CD4-positive, alpha-beta memory T cell (primary cell): ENCODE measurements at regions of chr10 and their contacts with region 1.

Region 1: DNA sequence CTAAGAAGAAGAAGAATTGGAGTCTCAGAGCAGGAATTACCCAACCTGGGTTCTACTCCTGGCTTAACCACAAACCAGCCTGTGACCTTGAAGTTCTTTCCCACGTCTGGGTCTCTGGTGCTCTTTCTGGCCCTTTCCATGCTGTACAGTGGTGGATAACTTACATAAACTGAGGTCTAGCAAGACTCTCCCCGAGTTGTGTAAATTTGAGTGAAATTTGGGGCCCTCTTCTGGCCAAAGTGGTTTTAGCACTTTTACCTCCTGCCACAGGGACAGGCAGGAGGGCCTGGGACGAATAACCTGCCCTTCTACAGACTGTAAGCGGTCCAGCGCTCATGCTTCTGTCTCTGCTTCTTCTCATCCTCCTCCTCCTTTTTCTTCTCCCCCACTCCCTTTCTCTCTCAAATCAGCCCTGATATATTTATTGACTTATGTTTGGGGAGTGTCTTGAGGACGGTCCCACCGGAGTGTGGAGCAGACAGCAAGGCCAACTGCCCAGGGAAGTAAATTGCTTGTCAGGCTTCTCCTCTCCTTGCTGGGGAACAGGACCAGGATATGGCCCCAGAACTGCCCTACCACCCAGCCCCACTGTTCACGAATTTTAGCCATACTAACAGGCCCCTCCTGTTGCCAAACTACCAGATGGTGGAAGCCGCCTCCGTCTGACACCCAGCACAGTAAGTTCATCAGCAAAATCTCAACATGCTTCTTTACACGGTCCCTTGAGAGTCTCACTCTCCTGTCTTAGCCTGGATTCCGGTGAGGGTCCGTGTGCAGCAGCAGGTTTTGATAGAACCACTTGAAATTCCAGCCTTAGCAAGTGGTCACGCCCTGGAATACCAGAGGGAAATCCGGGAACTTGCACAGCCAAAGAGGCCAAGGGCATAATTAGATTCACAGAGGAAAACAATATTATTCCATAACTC is 4.0 kb upstream of the SH3PXD2A start:
- DNase-seq: peak; percentile 51 to 58 (median 54)
- H3K4me3 ChIP-seq: no peak overlapping the region
- H3K4me3 Mint-ChIP-seq: peak overlapping the region in 1 of 8 donors; percentile 15
- H3K27ac ChIP-seq: no peak overlapping the region
- H3K27ac Mint-ChIP-seq: no peak overlapping the region
- H3K4me1 ChIP-seq: peaks cover 13% of the 10 kb centered on the region
- H3K4me1 Mint-ChIP-seq: peaks cover 5 to 12% (median 8%) of the 10 kb centered on the region in 4 donors
- H3K27me3 ChIP-seq: peaks cover 8% of the 10 kb centered on the region
- H3K27me3 Mint-ChIP-seq: peaks cover 5 to 13% of the 10 kb centered on the region in 2 donors

Region 2: DNA sequence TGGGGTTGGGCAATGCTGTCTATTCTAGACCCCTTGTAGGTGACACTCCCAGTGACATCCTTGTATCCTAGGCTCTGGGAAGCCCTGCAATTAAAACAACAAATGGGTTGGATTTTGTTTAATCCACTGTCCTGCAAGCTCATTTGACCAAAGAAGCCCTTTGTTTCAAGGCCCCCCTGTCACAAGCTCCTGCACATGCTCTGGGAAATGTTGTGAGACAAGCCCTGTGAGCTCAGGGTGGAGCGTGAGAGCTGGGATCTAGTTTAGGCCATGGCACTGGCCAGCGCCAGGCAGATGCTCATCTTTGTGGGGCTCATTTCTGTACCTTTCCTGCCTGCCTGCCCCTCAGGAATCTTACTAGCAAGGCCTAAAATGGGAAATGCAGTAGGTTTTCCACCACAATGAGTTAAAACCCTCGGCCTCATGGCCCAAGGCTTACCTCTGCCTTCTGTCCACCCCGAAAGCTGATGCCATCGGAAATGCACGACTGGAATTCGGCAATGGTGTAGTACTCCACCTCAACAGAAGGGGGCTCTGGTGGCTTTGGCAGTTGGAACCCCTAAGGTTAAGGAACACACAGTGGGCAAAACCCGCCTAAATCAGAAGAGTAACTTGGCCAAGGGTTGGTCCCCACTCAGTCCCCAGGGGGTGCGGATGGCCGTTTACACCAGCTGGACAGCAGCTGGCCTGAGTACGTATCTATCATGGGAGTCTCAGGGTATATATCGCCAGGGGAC is 253.9 kb before region 1 on chr10:
- CTCF ChIA-PET with region 1: no interaction called
- POLR2A ChIA-PET with region 1: no interaction called
- intact Hi-C with region 1: loop called (anchors 10 kb)
- DNase-seq: peak; percentile 26 to 53 (median 44)
- H3K4me3 ChIP-seq: no peak overlapping the region
- H3K4me3 Mint-ChIP-seq: no peak overlapping the region
- H3K27ac ChIP-seq: no peak overlapping the region
- H3K27ac Mint-ChIP-seq: peak overlapping the region in 1 of 7 donors; percentile 57
- H3K4me1 ChIP-seq: no peaks in the 10 kb centered on the region
- H3K4me1 Mint-ChIP-seq: no peaks in the 10 kb centered on the region
- H3K27me3 ChIP-seq: no peaks in the 10 kb centered on the region
- H3K27me3 Mint-ChIP-seq: no peaks in the 10 kb centered on the region

Region 3: DNA sequence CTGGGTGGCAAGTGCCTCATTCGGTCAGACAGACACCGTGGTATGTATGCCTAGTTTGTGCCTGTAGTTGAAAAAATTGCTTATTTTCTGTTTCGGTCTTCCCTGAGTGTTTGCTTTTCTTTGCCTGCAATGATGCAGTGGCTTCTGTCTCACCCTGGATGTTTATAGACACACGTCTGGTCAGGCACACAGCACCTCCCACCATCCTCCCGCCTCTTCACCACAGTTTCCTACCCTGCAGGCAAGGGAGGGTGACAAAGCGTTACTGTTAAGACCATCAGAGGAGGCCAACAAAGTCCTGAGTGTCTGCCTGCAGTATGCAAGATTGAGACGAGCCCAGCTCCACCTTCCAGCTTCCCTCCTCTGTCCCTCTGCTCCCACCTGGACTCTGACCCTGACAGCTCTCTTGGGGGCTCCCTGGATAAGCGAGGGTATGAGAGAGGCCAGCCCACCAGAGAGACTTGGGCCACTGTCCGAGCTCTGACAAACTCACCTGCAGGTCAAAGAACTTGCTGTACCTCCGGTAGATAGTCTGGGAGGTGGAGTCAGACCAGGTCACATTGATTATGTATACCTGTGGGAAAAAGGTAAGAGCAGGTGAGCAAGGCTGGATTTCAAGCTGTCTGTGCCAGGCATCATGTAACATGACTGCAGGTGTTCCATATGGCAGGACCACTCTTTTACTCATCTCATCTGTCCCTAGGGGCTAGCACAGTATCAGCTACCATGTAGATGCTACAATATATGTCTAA is 58.5 kb before region 1 on chr10:
- CTCF ChIA-PET with region 1: interaction called, 3 read pairs
- POLR2A ChIA-PET with region 1: interaction called, 3 read pairs
- intact Hi-C with region 1: loop called (anchors 10 kb)
- DNase-seq: peak; percentile 29 to 66 (median 39)
- H3K4me3 ChIP-seq: no peak overlapping the region
- H3K4me3 Mint-ChIP-seq: peak overlapping the region in 7 of 8 donors; percentile 3 to 62 (median 25)
- H3K27ac ChIP-seq: no peak overlapping the region
- H3K27ac Mint-ChIP-seq: peak overlapping the region; percentile 2 to 89 (median 42)
- H3K4me1 ChIP-seq: peaks cover 32% of the 10 kb centered on the region
- H3K4me1 Mint-ChIP-seq: peaks cover 16 to 40% (median 24%) of the 10 kb centered on the region in 4 donors
- H3K27me3 ChIP-seq: no peaks in the 10 kb centered on the region
- H3K27me3 Mint-ChIP-seq: no peaks in the 10 kb centered on the region